ENCODE measurements at regions of chr1 and their contacts with region 1.

Region 1: GRCh38 chr1:205354259-205354904 is 2.3 kb downstream of the KLHDC8A start:
- DNase-seq: peak; percentile 86
- H3K4me3 ChIP-seq: no peak overlapping the region
- H3K27ac ChIP-seq: no peak overlapping the region
- H3K4me1 ChIP-seq: peaks cover 34% of the 10 kb centered on the region
- H3K27me3 ChIP-seq: no peaks in the 10 kb centered on the region
- CTCF ChIP-seq: peak; percentile 87 to 91 (median 90)
- POLR2A ChIP-seq: no peak

Region 2: GRCh38 chr1:205430696-205431305 is 76.4 kb after region 1 on chr1:
- intact Hi-C with region 1: loop called (anchors 10 kb)
- DNase-seq: peak; percentile 84
- H3K4me3 ChIP-seq: peak overlapping the region; percentile 29 to 52
- H3K27ac ChIP-seq: peak overlapping the region in 1 of 2 donors; percentile 12
- H3K4me1 ChIP-seq: peaks cover 4% of the 10 kb centered on the region
- H3K27me3 ChIP-seq: no peaks in the 10 kb centered on the region
- CTCF ChIP-seq: peak; percentile 71 to 91 (median 78)
- POLR2A ChIP-seq: no peak

Measured in testis (tissue), 5 donors.